Activated CD4-positive, alpha-beta memory T cell treated with anti-CD3 and anti-CD28 coated beads for 36 hours (primary cell): ENCODE measurements at regions of chr19 and their contacts with region 1.

Region 1: GRCh38 chr19:54189735-54190502 is 539 bp upstream of the MBOAT7 start:
- DNase-seq: peak; percentile 100
- H3K4me3 Mint-ChIP-seq: peak overlapping the region; percentile 85
- H3K27ac Mint-ChIP-seq: peak overlapping the region; percentile 99
- H3K4me1 Mint-ChIP-seq: peaks cover 31% of the 10 kb centered on the region
- H3K27me3 Mint-ChIP-seq: no peaks in the 10 kb centered on the region

Region 2: GRCh38 chr19:54137086-54137921 is 52.6 kb before region 1 on chr19 and contains the start of gene CNOT3:
- CTCF ChIA-PET with region 1: interaction called, 9 read pairs
- POLR2A ChIA-PET with region 1: interaction called, 10 read pairs
- intact Hi-C with region 1: loop called (anchors 1 kb)
- DNase-seq: peak; percentile 100
- H3K4me3 Mint-ChIP-seq: peak within 1 kb of the TSS; percentile 86
- H3K27ac Mint-ChIP-seq: peak within 1 kb of the TSS; percentile 87
- H3K4me1 Mint-ChIP-seq: peaks cover 52% of the 10 kb centered on the region
- H3K27me3 Mint-ChIP-seq: no peaks in the 10 kb centered on the region
- total RNA-seq, gene CNOT3: 54.6 to 58.7 TPM

Region 3: DNA sequence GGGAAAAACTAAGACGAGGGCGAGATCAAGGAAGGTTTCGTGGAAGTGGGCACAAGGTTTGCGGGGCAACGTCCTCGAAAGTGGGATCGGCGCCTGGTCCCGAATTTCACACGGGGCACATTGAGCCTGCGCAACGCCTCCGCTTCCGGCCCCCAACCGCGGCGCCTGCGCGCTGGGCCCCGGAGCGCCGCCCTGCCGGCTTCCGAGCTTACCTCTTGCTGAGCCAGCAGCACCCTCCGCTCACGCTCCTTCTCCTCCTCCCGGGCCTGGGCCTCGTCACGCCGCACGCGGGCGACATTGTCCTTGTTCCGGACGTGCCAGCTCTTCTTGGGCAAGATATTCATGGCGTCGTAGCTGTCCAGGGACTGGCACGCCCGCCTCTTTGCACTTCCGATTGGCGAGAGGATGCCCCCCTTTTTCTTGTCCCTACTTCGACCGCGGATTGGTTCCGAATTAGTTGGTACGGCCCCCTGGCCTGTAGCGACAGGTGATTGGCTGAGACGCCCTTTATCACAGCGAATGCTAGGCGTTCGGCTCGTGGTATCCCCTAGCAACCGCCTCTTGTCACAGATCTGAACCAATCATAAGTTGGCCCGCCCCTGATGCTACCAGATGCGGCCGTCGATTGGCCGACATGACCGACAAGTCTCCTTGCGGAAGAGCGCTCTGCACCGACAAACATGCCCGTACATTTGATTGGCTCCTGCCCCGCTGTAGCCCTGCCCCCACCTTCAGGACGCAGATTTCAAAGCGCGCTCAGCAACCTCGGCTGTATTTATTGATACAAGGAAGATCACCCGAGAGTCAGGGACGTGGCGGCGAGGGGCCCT is 30.4 kb before region 1 on chr19 and contains the start of gene LENG1:
- CTCF ChIA-PET with region 1: interaction called, 11 read pairs
- POLR2A ChIA-PET with region 1: interaction called, 14 read pairs
- intact Hi-C with region 1: loop called (anchors 1 kb)
- DNase-seq: peak; percentile 100
- H3K4me3 Mint-ChIP-seq: peak within 1 kb of the TSS; percentile 95
- H3K27ac Mint-ChIP-seq: peak within 1 kb of the TSS; percentile 98
- H3K4me1 Mint-ChIP-seq: peaks cover 51% of the 10 kb centered on the region
- H3K27me3 Mint-ChIP-seq: peaks cover 3% of the 10 kb centered on the region
- total RNA-seq, gene LENG1: 4.7 to 5.3 TPM

Region 4: DNA sequence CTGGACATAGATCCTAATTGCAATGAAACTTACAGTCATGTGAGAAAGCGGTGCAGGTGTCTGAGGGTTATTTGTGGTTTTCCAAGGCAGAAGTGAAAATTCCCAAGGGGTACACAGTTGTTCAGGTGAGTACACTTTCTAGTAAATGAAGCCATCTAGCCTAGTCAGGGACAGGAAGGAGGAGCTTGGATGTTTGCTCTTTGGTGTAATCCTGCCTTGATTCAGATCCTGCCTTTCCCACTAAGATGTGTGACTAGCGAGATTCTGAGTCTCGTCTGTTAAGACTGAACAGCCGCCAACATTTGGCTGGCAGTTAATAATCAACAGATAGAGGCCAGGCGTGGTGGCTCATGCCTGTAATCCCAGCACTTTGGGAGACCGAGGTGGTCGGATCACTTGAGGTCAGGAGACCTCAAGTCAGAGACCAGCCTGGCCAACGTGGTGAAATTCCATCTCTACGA is 13.3 kb after region 1 on chr19:
- CTCF ChIA-PET with region 1: interaction called, 7 read pairs
- POLR2A ChIA-PET with region 1: interaction called, 103 read pairs
- intact Hi-C with region 1: loop called (anchors 1 kb)
- DNase-seq: no peak
- H3K4me3 Mint-ChIP-seq: peak overlapping the region; percentile 96
- H3K27ac Mint-ChIP-seq: peak overlapping the region; percentile 100
- H3K4me1 Mint-ChIP-seq: peaks cover 71% of the 10 kb centered on the region
- H3K27me3 Mint-ChIP-seq: no peaks in the 10 kb centered on the region

Region 5: GRCh38 chr19:54231077-54231931 is 41.4 kb after region 1 on chr19:
- CTCF ChIA-PET with region 1: interaction called, 12 read pairs
- POLR2A ChIA-PET with region 1: no interaction called
- intact Hi-C with region 1: no loop called
- DNase-seq: peak; percentile 90
- H3K4me3 Mint-ChIP-seq: no peak overlapping the region
- H3K27ac Mint-ChIP-seq: no peak overlapping the region
- H3K4me1 Mint-ChIP-seq: peaks cover 8% of the 10 kb centered on the region
- H3K27me3 Mint-ChIP-seq: peaks cover 24% of the 10 kb centered on the region

Region 6: GRCh38 chr19:54266133-54266532 is 76.2 kb after region 1 on chr19:
- CTCF ChIA-PET with region 1: interaction called, 10 read pairs
- POLR2A ChIA-PET with region 1: no interaction called
- intact Hi-C with region 1: no loop called
- DNase-seq: peak; percentile 84
- H3K4me3 Mint-ChIP-seq: no peak overlapping the region
- H3K27ac Mint-ChIP-seq: no peak overlapping the region
- H3K4me1 Mint-ChIP-seq: no peaks in the 10 kb centered on the region
- H3K27me3 Mint-ChIP-seq: peaks cover 29% of the 10 kb centered on the region

Region 7: GRCh38 chr19:54463531-54464043 is 273.7 kb after region 1 on chr19 and contains the start of gene LENG9:
- CTCF ChIA-PET with region 1: no interaction called
- POLR2A ChIA-PET with region 1: interaction called, 3 read pairs
- intact Hi-C with region 1: loop called (anchors 2 kb)
- DNase-seq: peak; percentile 99
- H3K4me3 Mint-ChIP-seq: peak within 1 kb of the TSS; percentile 78
- H3K27ac Mint-ChIP-seq: peak within 1 kb of the TSS; percentile 92
- H3K4me1 Mint-ChIP-seq: peaks cover 29% of the 10 kb centered on the region
- H3K27me3 Mint-ChIP-seq: no peaks in the 10 kb centered on the region
- total RNA-seq, gene LENG9: 5.3 to 5.6 TPM